ENCODE measurements at regions of chr13 and their contacts with region 1.

Region 1: DNA sequence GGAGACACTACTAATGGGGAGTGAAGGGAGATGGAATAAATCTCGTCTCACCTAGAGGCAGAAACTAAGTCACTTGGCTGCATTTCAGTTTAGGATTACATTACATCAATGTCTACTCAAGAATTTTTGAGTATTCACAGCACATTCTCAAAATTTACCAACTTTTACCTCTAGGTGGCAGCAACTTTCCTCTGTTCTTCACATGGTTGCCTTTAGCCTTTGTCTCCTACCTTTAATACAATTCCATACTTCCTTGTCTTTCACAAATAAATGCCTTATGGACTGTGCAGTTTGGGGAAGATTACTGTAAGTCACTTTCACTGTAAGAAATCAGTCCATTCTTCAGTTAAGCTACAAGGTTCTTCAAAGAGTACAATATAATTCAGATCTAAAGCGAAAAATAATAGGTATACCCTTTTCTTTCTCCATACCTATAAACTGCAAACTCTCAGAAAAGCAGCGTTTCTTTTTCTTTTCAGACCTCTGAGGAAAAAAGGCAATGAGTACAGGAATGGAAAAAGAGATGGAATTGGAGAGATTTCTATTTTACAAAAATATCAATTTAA is 379.4 kb downstream of the KLF12 start:
- DNase-seq: peak; percentile 79
- H3K4me3 ChIP-seq: no peak overlapping the region
- H3K27ac ChIP-seq: no peak overlapping the region
- H3K4me1 ChIP-seq: no peaks in the 10 kb centered on the region
- H3K27me3 ChIP-seq: no peaks in the 10 kb centered on the region
- CTCF ChIP-seq: peak; percentile 36 to 51
- POLR2A ChIP-seq: no peak

Region 2: GRCh38 chr13:75258159-75258782 is 1503.5 kb after region 1 on chr13:
- CTCF ChIA-PET with region 1: interaction called, 3 read pairs
- POLR2A ChIA-PET with region 1: no interaction called
- dilution Hi-C with region 1: no loop called
- intact Hi-C with region 1: loop called (anchors 1 kb)
- DNase-seq: peak; percentile 65
- H3K4me3 ChIP-seq: no peak overlapping the region
- H3K27ac ChIP-seq: no peak overlapping the region
- H3K4me1 ChIP-seq: no peaks in the 10 kb centered on the region
- H3K27me3 ChIP-seq: peaks cover 13 to 33% of the 10 kb centered on the region in 2 experiments
- CTCF ChIP-seq: peak; percentile 35 to 37
- POLR2A ChIP-seq: no peak

Measured in endothelial cell of umbilical vein (primary cell).